ENCODE measurements at regions of chr3 and their contacts with region 1.

Region 1: DNA sequence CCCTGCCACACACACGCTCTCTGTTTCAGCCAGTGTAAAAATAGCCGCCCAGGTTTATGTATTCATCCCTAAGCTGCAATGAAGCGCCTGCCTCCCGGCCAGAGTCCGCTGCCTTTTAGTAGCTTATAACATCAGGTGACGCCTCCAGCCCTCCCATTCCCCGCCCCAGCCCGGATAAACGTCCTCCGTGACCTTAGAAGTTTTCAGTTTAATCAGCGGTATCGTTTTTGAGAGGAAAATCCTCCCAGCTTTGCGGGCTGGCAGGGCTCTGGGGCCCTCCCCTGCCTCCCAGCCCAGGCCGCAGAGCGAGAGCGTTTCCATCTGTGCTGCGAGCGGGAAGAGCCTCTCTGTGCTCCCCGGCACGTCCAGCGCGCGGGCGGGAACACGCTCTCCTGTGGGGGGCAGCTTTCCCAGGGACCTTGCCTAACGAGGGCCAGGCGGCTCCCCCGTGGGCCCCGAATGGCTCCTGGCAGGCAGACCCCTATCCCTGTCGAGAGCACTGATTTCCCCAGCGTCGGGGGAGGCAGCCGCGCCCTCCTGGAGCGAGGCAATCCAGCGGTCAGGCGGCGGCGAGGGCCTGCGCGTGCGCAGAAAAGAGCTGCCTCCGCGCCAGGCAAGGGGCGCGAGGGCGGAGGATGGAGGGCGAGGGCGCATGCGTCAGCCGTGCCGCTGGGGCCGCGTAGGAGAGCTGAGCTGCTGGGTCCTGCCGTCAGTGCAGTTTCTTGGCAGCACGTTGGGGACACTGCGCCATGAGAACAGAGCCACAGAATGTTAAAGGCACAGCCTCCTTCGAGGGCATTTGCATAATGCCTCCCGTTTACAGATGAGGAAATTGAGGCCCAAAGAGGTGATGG is 71.1 kb downstream of the CCNL1 start:
- DNase-seq: peak; percentile 94
- H3K4me3 Mint-ChIP-seq: peak overlapping the region; percentile 73
- H3K27ac Mint-ChIP-seq: peak overlapping the region; percentile 96
- H3K4me1 Mint-ChIP-seq: peaks cover 51% of the 10 kb centered on the region
- H3K27me3 Mint-ChIP-seq: peaks cover 4% of the 10 kb centered on the region

Region 2: GRCh38 chr3:156554842-156555687 is 533.8 kb before region 1 on chr3 and contains the start of gene SSR3:
- CTCF ChIA-PET with region 1: interaction called, 5 read pairs
- intact Hi-C with region 1: loop called (anchors 1 kb)
- DNase-seq: peak; percentile 99
- H3K4me3 Mint-ChIP-seq: peak within 1 kb of the TSS; percentile 90
- H3K27ac Mint-ChIP-seq: peak within 1 kb of the TSS; percentile 86
- H3K4me1 Mint-ChIP-seq: peaks cover 40% of the 10 kb centered on the region
- H3K27me3 Mint-ChIP-seq: no peaks in the 10 kb centered on the region
- total RNA-seq, gene SSR3: 128 to 138 TPM

Region 3: GRCh38 chr3:156816800-156817645 is 271.8 kb before region 1 on chr3:
- CTCF ChIA-PET with region 1: no interaction called
- intact Hi-C with region 1: loop called (anchors 1 kb)
- DNase-seq: peak; percentile 90
- H3K4me3 Mint-ChIP-seq: peak overlapping the region; percentile 90
- H3K27ac Mint-ChIP-seq: peak overlapping the region; percentile 88
- H3K4me1 Mint-ChIP-seq: peaks cover 22% of the 10 kb centered on the region
- H3K27me3 Mint-ChIP-seq: no peaks in the 10 kb centered on the region

Region 4: GRCh38 chr3:156997351-156997750 is 91.5 kb before region 1 on chr3:
- CTCF ChIA-PET with region 1: no interaction called
- intact Hi-C with region 1: no loop called
- DNase-seq: no peak
- H3K4me3 Mint-ChIP-seq: no peak overlapping the region
- H3K27ac Mint-ChIP-seq: no peak overlapping the region
- H3K4me1 Mint-ChIP-seq: no peaks in the 10 kb centered on the region
- H3K27me3 Mint-ChIP-seq: no peaks in the 10 kb centered on the region

Region 5: DNA sequence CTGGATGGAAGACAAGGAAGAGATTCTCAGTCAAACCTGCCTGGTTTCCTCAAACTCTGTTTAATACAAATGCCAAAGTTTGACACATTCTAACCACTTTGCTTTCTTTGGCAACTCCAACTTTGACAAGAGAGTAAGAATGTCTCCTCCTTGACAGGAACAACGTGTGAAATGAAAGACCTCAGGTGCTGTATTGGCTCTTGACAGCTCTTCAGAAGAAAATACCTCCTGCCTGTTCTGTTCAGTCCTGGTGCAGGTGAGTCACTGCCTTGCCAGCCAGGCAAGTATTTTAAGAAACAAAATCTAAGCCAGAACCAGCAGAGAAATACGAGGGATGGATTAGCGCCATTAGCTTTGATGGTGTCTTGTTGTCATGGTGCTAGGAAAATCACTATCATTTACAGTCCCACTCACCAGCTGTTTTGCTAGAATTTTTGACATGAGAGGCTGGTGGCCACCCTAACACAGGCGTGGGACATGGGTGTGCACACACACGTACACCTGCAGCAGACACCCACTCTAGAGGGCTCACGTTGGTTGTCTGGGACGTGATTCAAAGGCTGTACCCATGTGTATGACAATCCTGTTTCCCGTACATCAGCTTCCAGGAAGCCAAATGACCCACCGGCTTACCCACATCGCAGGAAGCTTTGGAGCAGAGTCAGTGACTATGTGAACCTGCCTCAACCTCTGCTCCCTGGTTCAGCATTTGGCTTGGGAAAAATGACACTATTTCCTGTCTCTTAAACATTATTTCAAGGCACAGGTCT is 10.7 kb after region 1 on chr3:
- CTCF ChIA-PET with region 1: interaction called, 12 read pairs
- intact Hi-C with region 1: loop called (anchors 1 kb)
- DNase-seq: peak; percentile 18
- H3K4me3 Mint-ChIP-seq: no peak overlapping the region
- H3K27ac Mint-ChIP-seq: peak overlapping the region; percentile 50
- H3K4me1 Mint-ChIP-seq: peaks cover 40% of the 10 kb centered on the region
- H3K27me3 Mint-ChIP-seq: no peaks in the 10 kb centered on the region

Region 6: DNA sequence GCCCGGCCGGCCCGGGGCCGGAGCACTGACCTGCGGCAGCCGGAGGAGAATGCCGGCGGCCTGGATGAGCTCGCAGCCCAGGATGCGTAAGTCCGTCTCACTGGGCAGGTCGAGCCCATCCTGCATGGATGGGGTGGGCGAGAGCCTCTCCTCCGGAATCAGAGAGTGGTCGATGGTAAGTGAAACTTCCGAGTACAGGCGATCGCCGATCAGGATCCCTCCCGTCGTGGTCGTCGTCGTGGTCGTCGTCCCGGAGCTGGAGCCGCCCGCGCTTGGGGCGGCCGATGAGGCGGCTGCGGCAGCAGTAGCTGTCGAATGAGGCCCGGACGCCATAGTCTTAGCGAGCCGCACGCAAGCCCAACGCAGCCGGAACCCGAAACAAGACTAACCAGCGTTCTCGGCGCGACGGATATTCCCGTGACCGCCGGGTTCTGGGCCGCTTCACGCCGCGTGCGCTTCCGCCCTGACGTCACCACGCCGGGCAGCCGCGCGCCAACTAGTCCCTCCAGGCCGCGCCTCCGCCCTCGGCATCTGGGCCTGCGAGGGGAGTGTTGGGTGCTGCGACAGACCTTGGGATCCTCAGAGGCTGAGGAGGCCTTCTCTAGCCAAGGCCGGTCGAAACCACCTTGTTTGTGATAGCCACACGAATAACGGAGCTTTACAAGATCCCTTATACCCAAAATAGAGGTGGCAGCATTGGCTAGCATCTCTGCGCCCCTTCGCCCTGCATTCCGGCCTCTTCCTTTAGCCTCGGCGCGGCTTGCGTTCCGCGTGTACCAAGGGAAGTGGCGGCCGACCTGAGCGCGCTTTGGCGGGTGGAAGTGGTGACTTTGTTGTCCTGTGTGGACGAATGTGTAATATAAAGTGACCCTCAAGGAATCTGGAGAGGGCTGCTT is 71.2 kb after region 1 on chr3 and contains the start of gene CCNL1:
- CTCF ChIA-PET with region 1: interaction called, 3 read pairs
- intact Hi-C with region 1: loop called (anchors 1 kb)
- DNase-seq: peak; percentile 94
- H3K4me3 Mint-ChIP-seq: peak within 1 kb of the TSS; percentile 93
- H3K27ac Mint-ChIP-seq: peak within 1 kb of the TSS; percentile 99
- H3K4me1 Mint-ChIP-seq: peaks cover 43% of the 10 kb centered on the region
- H3K27me3 Mint-ChIP-seq: no peaks in the 10 kb centered on the region
- total RNA-seq, gene CCNL1: 206 to 214 TPM

Measured in activated naive CD4-positive, alpha-beta T cell treated with anti-CD3 and anti-CD28 coated beads for 36 hours (primary cell).